Activated T-helper 1 cell treated with anti-CD3 and anti-CD28 coated beads, Interleukin-12 subunit alpha, Interleukin-12 subunit beta, Interleukin-2, Interleukin-4 antibody, amounts not matched to agents 30 ng/mL and 10 ng/mL and 1 ng/mL, durations not matched to agents 14 hours and 24 hours and 36 hours (primary cell): ENCODE measurements at regions of chr19 and their contacts with region 1.

Region 1: GRCh38 chr19:13794757-13795589 is at the start of gene ZSWIM4:
- DNase-seq: peak; percentile 95
- H3K4me3 Mint-ChIP-seq: peak within 1 kb of the TSS; percentile 99
- H3K27ac Mint-ChIP-seq: peak within 1 kb of the TSS; percentile 93
- H3K4me1 Mint-ChIP-seq: peaks cover 33% of the 10 kb centered on the region
- H3K27me3 Mint-ChIP-seq: no peaks in the 10 kb centered on the region
- total RNA-seq, gene ZSWIM4: 7.6 and 7.9 TPM in 2 replicates

Region 2: GRCh38 chr19:13748169-13748828 is 46.7 kb before region 1 on chr19:
- intact Hi-C with region 1: loop called (anchors 1 kb)
- DNase-seq: peak; percentile 6
- H3K4me3 Mint-ChIP-seq: peak overlapping the region; percentile 96
- H3K27ac Mint-ChIP-seq: peak overlapping the region; percentile 93
- H3K4me1 Mint-ChIP-seq: peaks cover 10% of the 10 kb centered on the region
- H3K27me3 Mint-ChIP-seq: no peaks in the 10 kb centered on the region

Region 3: GRCh38 chr19:13784731-13785452 is 10.1 kb before region 1 on chr19:
- intact Hi-C with region 1: loop called (anchors 1 kb)
- DNase-seq: peak; percentile 45
- H3K4me3 Mint-ChIP-seq: peak overlapping the region; percentile 15
- H3K27ac Mint-ChIP-seq: peak overlapping the region; percentile 55
- H3K4me1 Mint-ChIP-seq: peaks cover 31% of the 10 kb centered on the region
- H3K27me3 Mint-ChIP-seq: no peaks in the 10 kb centered on the region

Region 4: GRCh38 chr19:13804830-13805683 is 10.1 kb after region 1 on chr19:
- intact Hi-C with region 1: no loop called
- DNase-seq: no peak
- H3K4me3 Mint-ChIP-seq: no peak overlapping the region
- H3K27ac Mint-ChIP-seq: no peak overlapping the region
- H3K4me1 Mint-ChIP-seq: peaks cover 5% of the 10 kb centered on the region
- H3K27me3 Mint-ChIP-seq: no peaks in the 10 kb centered on the region

Region 5: DNA sequence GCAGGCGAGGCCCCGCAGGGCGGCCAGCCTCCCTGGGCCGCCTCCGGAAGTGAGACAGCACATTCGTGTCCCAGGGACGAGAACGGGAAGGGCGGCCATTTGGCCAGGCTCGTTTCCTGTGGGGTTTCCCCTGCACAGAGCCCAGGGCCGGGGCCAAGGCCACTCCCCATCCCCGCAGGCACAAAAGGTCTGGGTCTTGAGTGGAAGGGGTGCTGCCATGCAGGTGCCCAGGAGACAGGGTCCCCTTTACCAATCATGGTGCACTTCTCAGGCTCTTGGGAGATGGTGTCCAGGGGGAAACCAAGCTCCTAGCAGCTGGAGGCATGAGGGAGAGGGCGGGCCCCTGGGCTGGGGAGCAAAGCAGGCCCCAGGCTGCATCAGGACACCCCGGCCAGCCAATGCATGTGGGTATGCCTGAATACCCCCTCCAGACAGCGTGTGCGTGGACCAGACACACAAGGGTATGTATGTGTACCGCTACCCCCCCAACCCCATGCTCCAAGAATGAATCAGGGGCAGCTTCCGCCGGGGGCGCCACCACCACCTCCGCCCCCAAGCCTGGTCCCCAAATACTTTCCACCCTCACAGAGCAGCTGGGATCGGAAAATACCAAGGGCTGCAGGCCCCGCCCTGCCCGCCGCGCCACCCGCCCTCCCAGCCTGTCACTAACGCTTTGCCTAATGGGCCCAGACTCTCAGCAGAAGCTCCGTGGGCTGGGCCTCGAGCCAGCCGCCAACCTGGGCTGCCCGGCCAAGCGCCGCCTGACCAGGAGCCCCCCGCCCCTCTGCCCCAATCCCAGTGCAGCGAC is 44.4 kb after region 1 on chr19:
- intact Hi-C with region 1: loop called (anchors 1 kb)
- DNase-seq: peak; percentile 79
- H3K4me3 Mint-ChIP-seq: peak overlapping the region; percentile 93
- H3K27ac Mint-ChIP-seq: peak overlapping the region; percentile 99
- H3K4me1 Mint-ChIP-seq: peaks cover 36% of the 10 kb centered on the region
- H3K27me3 Mint-ChIP-seq: no peaks in the 10 kb centered on the region

Region 6: GRCh38 chr19:13872695-13873389 is 77.9 kb after region 1 on chr19:
- intact Hi-C with region 1: no loop called
- DNase-seq: peak; percentile 33
- H3K4me3 Mint-ChIP-seq: peak overlapping the region; percentile 67
- H3K27ac Mint-ChIP-seq: no peak overlapping the region
- H3K4me1 Mint-ChIP-seq: peaks cover 4% of the 10 kb centered on the region
- H3K27me3 Mint-ChIP-seq: peaks cover 29% of the 10 kb centered on the region

Region 7: DNA sequence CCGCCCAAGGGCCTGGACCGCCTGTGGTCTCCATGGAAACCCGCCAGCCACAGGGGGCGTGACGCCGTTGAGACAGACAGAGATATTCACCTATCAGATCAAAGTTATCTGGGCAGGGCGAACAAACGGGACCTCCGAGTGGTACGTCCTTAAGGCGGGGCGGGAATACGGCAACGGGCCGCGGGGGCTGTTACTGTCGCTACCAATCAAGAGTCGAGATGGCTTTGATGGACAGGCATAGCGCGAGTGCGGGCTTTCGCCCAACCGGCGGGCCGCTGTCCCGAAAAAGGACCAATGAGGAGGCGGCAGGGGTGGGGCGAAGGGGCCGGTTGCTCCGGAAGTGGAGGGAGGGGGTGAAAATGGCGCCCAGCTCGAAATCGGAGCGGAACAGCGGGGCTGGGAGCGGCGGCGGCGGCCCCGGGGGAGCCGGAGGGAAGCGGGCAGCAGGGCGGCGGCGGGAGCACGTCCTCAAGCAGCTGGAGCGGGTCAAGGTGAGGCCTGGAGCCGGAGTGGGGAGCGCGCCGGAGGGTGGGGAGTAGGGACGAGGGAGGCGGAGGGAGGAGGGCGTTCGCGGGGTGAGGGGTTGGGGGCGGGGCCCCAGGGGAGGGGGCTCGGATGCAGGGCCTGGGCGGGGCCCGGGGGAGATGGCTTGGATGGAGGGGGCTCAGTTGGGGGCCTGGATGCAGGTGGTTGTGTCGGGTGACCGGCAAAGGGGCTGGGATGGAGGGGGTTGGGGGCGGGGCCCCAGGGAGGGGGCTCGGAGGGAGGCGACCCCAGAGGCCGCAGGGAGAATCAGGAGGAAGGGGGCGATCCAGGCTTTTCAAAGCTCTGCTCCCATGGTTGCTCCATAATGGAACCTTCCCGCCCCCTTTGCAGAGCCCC is 157.4 kb after region 1 on chr19 and contains the start of gene DCAF15:
- intact Hi-C with region 1: loop called (anchors 5 kb)
- DNase-seq: peak; percentile 99
- H3K4me3 Mint-ChIP-seq: peak within 1 kb of the TSS; percentile 96
- H3K27ac Mint-ChIP-seq: peak within 1 kb of the TSS; percentile 86
- H3K4me1 Mint-ChIP-seq: peaks cover 17% of the 10 kb centered on the region
- H3K27me3 Mint-ChIP-seq: no peaks in the 10 kb centered on the region
- total RNA-seq, gene DCAF15: 57.8 and 61.5 TPM in 2 replicates